ENCODE measurements at regions of chr12 and their contacts with region 1.

Region 1: DNA sequence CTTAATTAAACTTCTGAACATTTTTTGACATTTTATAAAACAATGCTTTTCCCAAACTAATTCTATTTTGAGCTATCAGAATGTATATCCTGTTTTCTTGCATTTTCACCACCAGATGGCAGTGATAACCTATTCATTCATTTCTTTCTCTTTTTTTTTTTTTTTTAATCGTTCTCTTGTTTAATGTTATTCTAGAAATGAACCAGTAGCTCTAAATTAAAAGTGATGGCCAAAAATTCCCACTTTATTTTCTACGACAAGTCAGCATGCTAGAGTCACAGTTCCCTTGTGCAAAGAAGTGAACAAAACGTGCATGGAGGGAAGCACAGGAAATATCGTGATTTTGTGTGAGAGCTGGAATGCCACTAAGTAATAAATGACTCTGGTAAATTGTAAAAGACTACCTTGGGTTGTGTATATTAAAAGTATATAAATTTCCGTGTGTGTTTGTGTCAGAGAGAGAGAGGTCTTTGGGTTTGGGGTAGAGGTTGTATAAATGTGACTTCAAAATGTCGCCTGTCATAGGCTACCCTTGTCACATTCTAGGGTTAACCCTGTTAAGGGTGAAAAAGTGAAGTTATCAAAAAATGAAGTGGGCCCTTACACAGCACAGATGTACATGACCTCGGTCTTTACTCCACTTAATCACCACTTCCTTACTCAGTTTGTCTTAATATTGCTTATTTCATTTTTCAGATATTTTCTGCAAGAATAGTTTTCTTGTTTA is 40.4 kb upstream of the LDHB start:
- DNase-seq: no peak
- H3K4me3 Mint-ChIP-seq: no peak overlapping the region
- H3K27ac Mint-ChIP-seq: no peak overlapping the region
- H3K4me1 Mint-ChIP-seq: peaks cover 11% of the 10 kb centered on the region
- H3K27me3 Mint-ChIP-seq: no peaks in the 10 kb centered on the region

Region 2: DNA sequence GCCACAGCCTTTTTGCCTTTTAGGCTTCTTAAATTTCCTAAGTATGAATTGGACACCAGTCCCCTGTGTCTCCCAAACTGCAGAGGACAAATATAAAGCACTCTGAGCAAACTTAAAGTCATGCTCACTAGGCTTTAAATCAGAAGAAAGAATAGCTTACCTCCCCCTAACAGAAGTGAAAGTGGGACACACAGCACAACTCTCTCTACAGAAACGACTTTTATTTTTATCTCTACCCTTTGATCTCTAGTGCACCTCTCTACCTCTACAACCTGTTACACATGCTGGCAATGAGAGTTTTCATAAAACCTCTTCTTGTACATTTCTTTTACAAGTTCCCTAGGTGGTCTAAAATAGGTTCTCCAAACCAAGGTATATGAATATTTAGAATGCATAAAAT is 305.7 kb before region 1 on chr12:
- CTCF ChIA-PET with region 1: no interaction called
- intact Hi-C with region 1: no loop called
- DNase-seq: no peak
- H3K4me3 Mint-ChIP-seq: no peak overlapping the region
- H3K27ac Mint-ChIP-seq: no peak overlapping the region
- H3K4me1 Mint-ChIP-seq: peaks cover 12% of the 10 kb centered on the region
- H3K27me3 Mint-ChIP-seq: peaks cover 4% of the 10 kb centered on the region

Region 3: DNA sequence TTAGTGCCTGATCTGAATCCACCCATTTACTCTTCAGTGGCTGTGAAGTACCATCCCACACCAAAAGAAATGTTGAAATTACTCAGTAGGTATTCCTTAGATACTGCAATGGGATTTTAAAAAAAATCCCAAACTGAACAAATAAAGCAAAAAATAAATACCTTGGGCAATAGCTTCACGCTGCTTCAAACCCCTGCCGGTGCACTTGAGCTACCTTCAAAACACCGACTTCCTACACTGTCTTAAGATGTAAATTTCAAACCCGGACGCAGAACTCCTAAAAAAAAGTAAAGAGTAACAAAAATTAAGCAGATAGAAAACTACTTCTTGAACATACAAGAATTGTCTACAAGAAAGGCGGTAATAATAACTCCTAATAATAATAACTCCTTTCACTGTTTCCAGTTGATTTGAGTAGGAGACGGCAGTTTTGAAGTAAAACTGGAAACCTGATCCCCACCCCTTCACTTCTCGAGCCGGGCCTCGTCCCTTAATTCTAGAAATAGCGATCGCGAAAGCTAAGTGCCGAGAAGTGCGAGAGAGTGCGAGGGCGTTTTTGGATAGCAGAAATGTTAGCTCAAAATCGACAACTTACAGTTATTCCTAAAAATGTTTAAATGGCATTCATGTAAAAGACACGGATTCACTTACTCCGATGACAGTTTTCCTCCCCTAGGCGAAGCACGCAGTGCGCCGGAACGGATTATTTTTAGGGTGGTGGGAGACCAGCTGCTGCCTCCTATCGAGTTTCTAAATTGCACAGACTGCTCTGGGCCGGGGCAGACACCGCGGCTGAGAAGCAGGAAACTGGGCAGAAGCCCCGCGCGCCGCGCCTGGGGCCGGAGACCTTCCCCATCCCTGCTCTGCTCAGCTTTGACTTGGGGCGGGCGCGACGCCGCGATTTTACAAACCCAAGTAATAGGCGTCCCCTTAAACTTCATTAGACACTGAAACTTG is 242.8 kb after region 1 on chr12 and contains the start of gene ABCC9:
- CTCF ChIA-PET with region 1: interaction called, 8 read pairs
- intact Hi-C with region 1: loop called (anchors 2 kb)
- DNase-seq: peak; percentile 21
- H3K4me3 Mint-ChIP-seq: peak within 1 kb of the TSS; percentile 42
- H3K27ac Mint-ChIP-seq: peak within 1 kb of the TSS; percentile 18
- H3K4me1 Mint-ChIP-seq: peaks cover 16% of the 10 kb centered on the region
- H3K27me3 Mint-ChIP-seq: peaks cover 58% of the 10 kb centered on the region
- total RNA-seq, gene ABCC9: not detected

Region 4: DNA sequence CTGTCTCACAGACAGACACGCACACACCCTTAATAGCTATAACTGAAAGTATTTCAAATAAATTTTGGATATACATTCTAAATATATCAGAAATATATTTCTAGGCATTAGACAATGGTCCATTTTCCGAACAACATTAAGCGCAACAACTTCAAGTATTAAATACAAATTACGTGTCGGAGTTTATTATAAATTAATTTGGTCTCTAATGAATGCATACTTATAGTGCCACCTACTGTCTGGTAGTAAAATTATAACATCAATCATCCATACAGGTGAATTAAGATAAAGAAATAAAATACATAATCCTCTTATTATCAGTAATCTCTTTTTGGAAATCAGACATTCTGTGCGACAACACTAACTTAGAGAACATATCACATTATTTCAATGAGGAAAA is 320.8 kb after region 1 on chr12:
- CTCF ChIA-PET with region 1: interaction called, 41 read pairs
- intact Hi-C with region 1: loop called (anchors 1 kb)
- DNase-seq: no peak
- H3K4me3 Mint-ChIP-seq: no peak overlapping the region
- H3K27ac Mint-ChIP-seq: no peak overlapping the region
- H3K4me1 Mint-ChIP-seq: no peaks in the 10 kb centered on the region
- H3K27me3 Mint-ChIP-seq: no peaks in the 10 kb centered on the region

Region 5: DNA sequence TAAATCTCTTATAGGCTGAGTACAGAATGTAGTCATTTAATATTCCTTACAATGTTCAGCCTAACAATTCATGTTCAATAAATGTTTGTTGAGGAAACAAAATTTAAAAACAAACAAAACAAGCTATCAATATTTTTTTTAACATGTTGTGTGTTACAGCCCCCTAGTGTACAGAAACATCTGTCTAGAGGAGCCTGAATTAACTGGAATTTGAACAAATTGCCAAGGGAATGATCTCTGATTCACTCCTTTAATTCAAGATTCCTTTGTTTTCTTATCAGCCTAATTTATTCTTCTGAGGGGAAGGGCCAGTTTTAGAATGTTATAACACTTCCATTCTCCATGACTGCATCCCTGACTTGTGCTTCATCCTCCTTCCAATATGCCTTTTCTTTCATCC is 475.1 kb after region 1 on chr12:
- CTCF ChIA-PET with region 1: no interaction called
- intact Hi-C with region 1: loop called (anchors 5 kb)
- DNase-seq: no peak
- H3K4me3 Mint-ChIP-seq: no peak overlapping the region
- H3K27ac Mint-ChIP-seq: no peak overlapping the region
- H3K4me1 Mint-ChIP-seq: peaks cover 4% of the 10 kb centered on the region
- H3K27me3 Mint-ChIP-seq: no peaks in the 10 kb centered on the region

Measured in activated naive CD4-positive, alpha-beta T cell treated with anti-CD3 and anti-CD28 coated beads for 36 hours (primary cell).